ENCODE measurements at regions of chr11 and their contacts with region 1.

Region 1: DNA sequence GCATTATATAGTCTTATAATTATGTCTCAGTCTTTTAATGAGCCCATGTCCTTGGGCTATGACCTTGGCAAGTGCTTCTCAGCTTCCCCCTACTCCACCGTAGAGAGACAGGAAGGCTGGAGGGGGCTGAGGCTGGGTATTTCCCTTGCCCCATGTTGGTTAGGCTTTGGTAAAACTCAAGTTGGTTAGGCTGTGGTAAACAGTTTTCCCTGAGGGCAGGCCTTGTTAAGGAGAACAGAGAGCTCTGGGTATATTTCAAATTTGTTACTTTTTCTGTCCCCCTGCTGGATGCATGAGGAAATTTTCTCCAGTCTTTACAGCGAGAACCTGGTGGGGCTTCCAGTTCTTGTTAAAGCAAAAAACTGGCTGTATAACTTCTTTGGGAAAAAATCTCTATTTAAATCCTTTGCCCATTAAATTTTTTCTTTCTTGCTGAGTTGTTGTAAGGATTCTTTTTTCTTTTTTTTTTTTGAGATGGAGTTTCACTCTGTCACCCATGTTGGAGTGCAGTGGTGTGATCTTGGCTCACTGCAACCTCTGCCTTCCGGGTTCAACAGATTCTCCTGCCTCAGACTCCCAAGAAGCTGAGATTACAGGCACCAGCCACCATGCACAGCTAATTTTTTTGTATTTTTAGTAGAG is 12.2 kb upstream of the DCHS1 start:
- DNase-seq: peak; percentile 84
- H3K4me3 Mint-ChIP-seq: no peak overlapping the region
- H3K27ac Mint-ChIP-seq: peak overlapping the region; percentile 29
- H3K4me1 Mint-ChIP-seq: peaks cover 50% of the 10 kb centered on the region
- H3K27me3 Mint-ChIP-seq: peaks cover 4% of the 10 kb centered on the region

Region 2: DNA sequence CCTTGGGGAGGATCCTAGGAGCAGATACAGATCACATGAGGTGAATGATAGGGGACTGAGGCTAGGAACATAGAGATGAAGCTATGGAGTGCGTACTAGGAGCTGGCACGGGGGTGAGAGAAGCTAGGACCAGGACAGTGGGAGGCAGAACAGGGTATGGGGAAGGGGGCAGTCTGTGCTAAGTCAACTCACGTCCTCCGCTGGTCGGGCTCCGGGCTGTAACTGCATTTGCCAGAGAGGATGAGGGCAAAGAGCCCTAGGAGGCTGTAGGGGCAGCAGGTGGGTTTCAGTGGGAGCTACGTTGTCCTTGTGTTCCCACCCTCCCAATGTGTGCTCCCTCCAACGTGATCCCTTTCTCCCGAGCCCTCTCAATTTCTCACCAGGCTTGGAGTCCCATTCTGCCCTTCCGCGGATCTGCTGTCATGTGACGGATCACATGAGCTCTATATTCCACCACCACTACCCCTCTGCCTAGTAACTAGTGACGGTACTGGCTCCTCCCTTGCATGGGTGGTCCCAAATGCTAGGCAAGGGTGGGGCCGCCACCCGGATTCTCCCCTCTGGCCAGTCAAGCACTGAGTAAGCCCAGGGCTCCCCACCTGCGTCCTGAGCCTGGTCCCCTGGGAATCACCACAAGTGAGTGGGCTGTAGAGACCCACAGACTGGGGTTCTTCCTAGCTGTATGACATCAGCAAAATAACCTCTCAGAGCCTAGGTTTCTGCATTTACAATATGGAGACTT is 48.7 kb before region 1 on chr11 and contains the start of gene TPP1:
- intact Hi-C with region 1: loop called (anchors 2 kb)
- DNase-seq: peak; percentile 98
- H3K4me3 Mint-ChIP-seq: no peak within 1 kb of the TSS
- H3K27ac Mint-ChIP-seq: no peak within 1 kb of the TSS
- H3K4me1 Mint-ChIP-seq: peaks cover 3% of the 10 kb centered on the region
- H3K27me3 Mint-ChIP-seq: no peaks in the 10 kb centered on the region
- total RNA-seq, gene TPP1: 32.2 and 35.2 TPM in 2 replicates

Region 3: DNA sequence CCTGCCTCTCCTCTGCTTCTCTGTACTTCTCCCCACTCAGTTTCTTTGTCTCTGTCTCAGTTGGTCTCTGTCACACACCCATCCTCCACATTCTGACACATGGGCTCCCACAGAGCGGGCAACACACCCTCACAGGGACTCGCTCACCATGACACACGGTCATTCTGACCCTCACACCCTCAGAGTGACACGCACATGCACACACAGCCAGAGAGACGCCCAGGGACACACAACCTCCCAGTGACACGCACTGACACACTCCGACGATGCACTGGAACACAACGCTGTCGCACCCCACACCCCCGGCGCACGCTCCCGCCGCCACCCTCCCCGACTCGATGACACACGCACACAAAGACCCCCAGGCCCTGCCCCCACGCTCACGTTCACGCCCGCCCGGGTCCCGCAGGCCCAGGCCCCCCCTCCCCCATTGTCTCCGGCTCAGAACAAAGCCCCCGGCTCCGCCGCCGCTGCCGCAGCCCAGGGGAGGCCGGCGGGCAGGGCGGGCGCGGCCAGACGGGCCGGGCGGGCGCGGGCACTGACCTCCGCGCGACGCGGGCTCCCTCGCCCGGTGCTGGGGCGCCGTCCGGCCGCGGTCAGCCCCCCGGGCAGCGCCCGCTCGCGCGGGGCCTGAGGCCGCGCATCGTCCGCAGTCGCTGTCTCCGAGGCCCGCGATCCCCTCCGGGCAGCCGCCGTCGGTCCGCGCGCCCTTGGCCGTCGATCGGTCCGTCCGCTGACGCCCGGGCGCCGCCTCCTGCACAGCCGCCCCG is 12.6 kb before region 1 on chr11:
- intact Hi-C with region 1: loop called (anchors 2 kb)
- DNase-seq: no peak
- H3K4me3 Mint-ChIP-seq: no peak overlapping the region
- H3K27ac Mint-ChIP-seq: no peak overlapping the region
- H3K4me1 Mint-ChIP-seq: peaks cover 5% of the 10 kb centered on the region
- H3K27me3 Mint-ChIP-seq: peaks cover 16% of the 10 kb centered on the region

Region 4: GRCh38 chr11:6703247-6704063 is 35.6 kb after region 1 on chr11:
- intact Hi-C with region 1: no loop called
- DNase-seq: peak; percentile 70
- H3K4me3 Mint-ChIP-seq: no peak overlapping the region
- H3K27ac Mint-ChIP-seq: no peak overlapping the region
- H3K4me1 Mint-ChIP-seq: peaks cover 4% of the 10 kb centered on the region
- H3K27me3 Mint-ChIP-seq: no peaks in the 10 kb centered on the region

Region 5: DNA sequence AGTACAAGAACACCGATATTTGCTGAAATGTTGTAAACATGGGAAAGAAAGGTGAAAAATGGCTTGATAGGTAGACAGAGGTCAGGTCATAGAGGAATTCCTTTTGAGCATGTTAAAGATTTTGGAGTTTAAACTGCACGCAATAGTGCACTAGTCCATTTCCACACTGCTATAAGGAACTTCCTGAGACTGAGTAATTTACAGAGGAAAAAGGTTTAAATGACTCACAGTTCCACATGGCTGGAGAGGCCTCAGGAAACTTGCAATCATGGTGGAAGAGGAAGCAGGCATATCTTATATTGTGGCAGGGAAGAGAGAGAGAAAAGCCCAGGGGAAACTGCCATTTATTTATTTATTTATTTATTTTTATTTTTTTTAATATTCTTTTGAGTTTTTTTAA is 182.7 kb after region 1 on chr11:
- intact Hi-C with region 1: no loop called
- DNase-seq: no peak
- H3K4me3 Mint-ChIP-seq: no peak overlapping the region
- H3K27ac Mint-ChIP-seq: no peak overlapping the region
- H3K4me1 Mint-ChIP-seq: no peaks in the 10 kb centered on the region
- H3K27me3 Mint-ChIP-seq: no peaks in the 10 kb centered on the region

Measured in activated CD4-positive, alpha-beta T cell treated with anti-CD3 and anti-CD28 coated beads, Interleukin-2, amount 10 ng/mL, durations not matched to agents 24 days and 14 days (primary cell).